CD14-positive monocyte (primary cell): ENCODE measurements at regions of chr12 and their contacts with region 1.

Region 1: DNA sequence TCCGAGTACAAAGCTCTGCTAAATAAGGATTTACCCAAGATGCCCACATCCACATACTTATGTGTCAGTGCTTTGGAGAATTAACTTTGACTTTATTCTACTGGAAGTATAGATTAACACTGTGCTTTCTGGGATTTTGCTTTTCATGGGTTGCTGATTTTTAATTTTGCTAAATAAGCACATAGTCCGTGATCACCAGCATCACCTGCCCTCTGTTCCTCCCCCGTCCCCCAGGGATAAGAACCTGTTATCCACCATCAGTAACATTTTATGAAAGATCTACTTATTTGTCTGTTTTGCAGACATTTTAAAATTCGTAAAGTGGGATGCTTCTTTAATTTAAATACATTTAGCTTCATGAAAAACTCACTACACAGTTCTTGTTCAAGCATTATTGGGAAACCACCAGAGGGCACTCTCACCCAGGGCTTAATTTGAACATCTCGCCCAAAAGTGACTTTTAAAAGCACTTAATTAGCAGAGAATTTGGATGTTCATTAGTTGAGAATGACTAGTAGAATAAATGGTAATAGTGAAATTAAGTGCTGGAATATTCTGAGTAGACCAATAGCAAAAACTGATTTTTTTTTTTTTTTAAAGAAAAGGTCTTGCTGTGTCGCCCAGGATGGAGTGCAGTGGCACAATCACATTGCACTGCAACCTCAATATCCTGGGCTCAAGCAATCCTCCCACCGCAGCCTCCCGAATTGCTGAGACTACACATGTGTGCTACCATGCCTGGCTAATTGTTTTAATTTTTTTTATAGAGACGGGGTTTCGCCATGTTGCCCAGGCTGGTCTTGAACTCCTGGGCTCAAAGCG is 35.7 kb downstream of the MRPL42 start:
- DNase-seq: peak; percentile 20 to 39 (median 34)
- H3K4me3 ChIP-seq: no peak overlapping the region
- H3K4me3 Mint-ChIP-seq: no peak overlapping the region
- H3K27ac ChIP-seq: no peak overlapping the region
- H3K27ac Mint-ChIP-seq: no peak overlapping the region
- H3K4me1 ChIP-seq: no peaks in the 10 kb centered on the region
- H3K4me1 Mint-ChIP-seq: peaks cover 2% of the 10 kb centered on the region
- H3K27me3 ChIP-seq: no peaks in the 10 kb centered on the region
- H3K27me3 Mint-ChIP-seq: no peaks in the 10 kb centered on the region
- CTCF ChIP-seq: peak; percentile 88

Region 2: DNA sequence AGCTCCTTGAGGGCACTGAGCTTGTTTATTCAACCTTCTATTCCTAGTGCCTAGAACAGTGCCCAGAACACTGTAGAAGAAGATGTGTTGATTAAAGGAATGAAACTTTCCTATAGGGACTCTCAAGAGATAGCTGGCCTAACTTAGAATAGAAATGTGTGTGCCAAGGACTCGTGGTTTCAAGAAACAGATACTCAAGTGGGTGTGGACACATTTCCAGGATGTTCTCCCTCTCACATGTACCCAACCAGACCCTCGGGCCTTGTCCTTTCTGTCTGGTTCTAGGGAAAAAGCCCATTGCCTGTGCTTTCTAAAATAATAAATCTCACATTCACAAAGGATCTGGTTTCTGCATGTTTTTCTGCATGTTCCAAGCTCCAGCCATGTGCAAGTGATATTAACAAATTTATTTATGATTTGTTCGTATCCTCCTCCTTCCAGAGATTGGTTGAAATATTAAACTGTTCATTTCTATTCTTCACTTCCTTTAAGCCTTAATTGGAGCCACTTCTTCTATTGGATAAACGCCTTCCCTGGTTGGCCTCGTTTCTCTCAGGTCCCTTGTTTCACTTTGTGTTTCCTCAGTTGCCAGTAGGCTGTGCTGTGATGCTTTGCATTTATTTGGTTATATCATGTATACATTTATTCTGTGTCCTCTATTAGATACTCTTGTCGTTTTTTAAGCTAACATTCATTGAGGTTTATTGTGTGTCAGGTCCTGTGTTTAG is 263.9 kb after region 1 on chr12:
- intact Hi-C with region 1: loop called in 1 of 2 experiments (anchors 10 kb)
- DNase-seq: peak; percentile 44 to 59 (median 56)
- H3K4me3 ChIP-seq: peak overlapping the region in 1 of 3 experiments; percentile 16
- H3K4me3 Mint-ChIP-seq: peak overlapping the region in 1 of 2 donors; percentile 47
- H3K27ac ChIP-seq: no peak overlapping the region
- H3K27ac Mint-ChIP-seq: peak overlapping the region in 2 of 7 donors; percentile 55 to 70
- H3K4me1 ChIP-seq: peaks cover 9 to 20% of the 10 kb centered on the region in 2 donors
- H3K4me1 Mint-ChIP-seq: peaks cover 20% of the 10 kb centered on the region
- H3K27me3 ChIP-seq: no peaks in the 10 kb centered on the region
- H3K27me3 Mint-ChIP-seq: peaks cover 0 to 1% (median 0%) of the 10 kb centered on the region in 3 donors
- CTCF ChIP-seq: peak; percentile 75

Region 3: DNA sequence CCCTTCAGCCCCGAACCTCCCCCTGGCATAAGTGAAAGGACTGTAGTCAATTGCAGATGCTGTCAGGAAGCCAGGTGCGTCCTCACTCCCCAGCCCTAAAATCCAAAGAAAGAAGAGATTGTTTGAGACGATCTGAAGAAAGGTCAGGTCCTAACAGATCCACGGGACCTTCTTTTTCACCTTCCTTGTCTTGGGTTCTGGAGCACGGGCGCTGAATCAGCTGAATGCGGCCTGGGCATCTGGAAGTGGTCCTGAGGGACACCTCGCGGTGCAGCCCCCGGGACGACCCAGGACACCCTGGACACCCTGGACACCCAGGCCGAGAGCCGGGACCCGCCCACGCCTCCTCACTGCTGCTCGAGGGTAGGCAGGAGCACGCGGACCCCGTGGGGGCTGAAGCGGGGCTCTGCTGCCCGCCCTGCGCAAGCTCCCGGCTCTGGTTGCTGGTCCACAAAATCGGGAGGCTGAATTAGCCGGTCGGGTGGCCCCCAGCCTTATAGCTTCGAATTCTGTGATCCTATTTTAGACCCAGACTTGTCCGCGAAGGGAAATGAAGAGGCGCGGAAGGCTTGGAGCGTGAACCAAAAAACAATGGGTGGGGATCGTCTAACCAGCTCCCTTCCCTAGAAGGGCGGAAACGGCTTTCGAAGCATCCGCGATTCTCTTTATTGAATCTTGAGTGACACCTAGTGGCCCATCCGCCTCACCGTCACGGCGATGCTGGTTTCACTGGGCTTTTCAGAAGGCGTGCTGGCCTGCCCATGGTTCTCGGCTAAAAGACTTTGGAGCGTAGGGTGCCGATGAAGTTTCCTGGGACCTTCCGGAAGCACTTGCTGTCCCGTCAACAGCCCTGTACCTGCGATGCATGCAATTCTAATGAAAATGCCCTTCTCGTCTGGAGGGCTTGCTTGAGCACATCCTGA is 599.0 kb after region 1 on chr12:
- intact Hi-C with region 1: loop called (anchors 2 kb)
- DNase-seq: peak; percentile 76 to 88 (median 78)
- H3K4me3 ChIP-seq: peak overlapping the region; percentile 14 to 84 (median 54)
- H3K4me3 Mint-ChIP-seq: peak overlapping the region; percentile 76 to 86
- H3K27ac ChIP-seq: no peak overlapping the region
- H3K27ac Mint-ChIP-seq: peak overlapping the region in 3 of 7 donors; percentile 26 to 66 (median 44)
- H3K4me1 ChIP-seq: peaks cover 16 to 18% of the 10 kb centered on the region in 2 donors
- H3K4me1 Mint-ChIP-seq: peaks cover 20% of the 10 kb centered on the region
- H3K27me3 ChIP-seq: peaks cover 14 to 34% of the 10 kb centered on the region in 2 donors
- H3K27me3 Mint-ChIP-seq: peaks cover 26 to 44% (median 32%) of the 10 kb centered on the region in 3 donors
- CTCF ChIP-seq: peak; percentile 76

Region 4: GRCh38 chr12:94532490-94533422 is 1029.7 kb after region 1 on chr12:
- intact Hi-C with region 1: loop called in 1 of 2 experiments (anchors 10 kb)
- DNase-seq: peak; percentile 34 to 56 (median 44)
- H3K4me3 ChIP-seq: no peak overlapping the region
- H3K4me3 Mint-ChIP-seq: no peak overlapping the region
- H3K27ac ChIP-seq: no peak overlapping the region
- H3K27ac Mint-ChIP-seq: peak overlapping the region in 2 of 7 donors; percentile 21 to 30
- H3K4me1 ChIP-seq: no peaks in the 10 kb centered on the region
- H3K4me1 Mint-ChIP-seq: peaks cover 6% of the 10 kb centered on the region
- H3K27me3 ChIP-seq: no peaks in the 10 kb centered on the region
- H3K27me3 Mint-ChIP-seq: peaks cover 2 to 6% (median 2%) of the 10 kb centered on the region in 3 donors
- CTCF ChIP-seq: peak; percentile 78